CD4-positive, alpha-beta memory T cell (primary cell): ENCODE measurements at regions of chr5 and their contacts with region 1.

Region 1: GRCh38 chr5:142145106-142145900 is 36.7 kb downstream of the NDFIP1 start:
- DNase-seq: peak; percentile 54 to 66 (median 57)
- H3K4me3 ChIP-seq: no peak overlapping the region
- H3K4me3 Mint-ChIP-seq: no peak overlapping the region
- H3K27ac ChIP-seq: no peak overlapping the region
- H3K27ac Mint-ChIP-seq: no peak overlapping the region
- H3K4me1 ChIP-seq: no peaks in the 10 kb centered on the region
- H3K4me1 Mint-ChIP-seq: no peaks in the 10 kb centered on the region
- H3K27me3 ChIP-seq: no peaks in the 10 kb centered on the region
- H3K27me3 Mint-ChIP-seq: no peaks in the 10 kb centered on the region

Region 2: GRCh38 chr5:140875066-140876065 is 1269.9 kb before region 1 on chr5 and contains the start of gene PCDHA12:
- CTCF ChIA-PET with region 1: no interaction called
- POLR2A ChIA-PET with region 1: no interaction called
- intact Hi-C with region 1: no loop called
- DNase-seq: no peak
- H3K4me3 ChIP-seq: no peak within 1 kb of the TSS
- H3K4me3 Mint-ChIP-seq: peak within 1 kb of the TSS in 1 of 8 donors; percentile 17
- H3K27ac ChIP-seq: no peak within 1 kb of the TSS
- H3K27ac Mint-ChIP-seq: no peak within 1 kb of the TSS
- H3K4me1 ChIP-seq: no peaks in the 10 kb centered on the region
- H3K4me1 Mint-ChIP-seq: no peaks in the 10 kb centered on the region
- H3K27me3 ChIP-seq: no peaks in the 10 kb centered on the region
- H3K27me3 Mint-ChIP-seq: peaks cover 10 to 22% of the 10 kb centered on the region in 2 donors
- total RNA-seq, gene PCDHA12: not detected

Region 3: GRCh38 chr5:142024771-142025304 is 120.5 kb before region 1 on chr5:
- CTCF ChIA-PET with region 1: interaction called, 14 read pairs
- POLR2A ChIA-PET with region 1: interaction called, 4 read pairs
- intact Hi-C with region 1: no loop called
- DNase-seq: peak; percentile 78 to 86 (median 81)
- H3K4me3 ChIP-seq: peak overlapping the region; percentile 37 to 52
- H3K4me3 Mint-ChIP-seq: peak overlapping the region; percentile 84 to 94 (median 88)
- H3K27ac ChIP-seq: peak overlapping the region; percentile 57
- H3K27ac Mint-ChIP-seq: peak overlapping the region; percentile 93 to 99 (median 98)
- H3K4me1 ChIP-seq: peaks cover 13% of the 10 kb centered on the region
- H3K4me1 Mint-ChIP-seq: peaks cover 16 to 23% (median 19%) of the 10 kb centered on the region in 4 donors
- H3K27me3 ChIP-seq: no peaks in the 10 kb centered on the region
- H3K27me3 Mint-ChIP-seq: no peaks in the 10 kb centered on the region

Region 4: DNA sequence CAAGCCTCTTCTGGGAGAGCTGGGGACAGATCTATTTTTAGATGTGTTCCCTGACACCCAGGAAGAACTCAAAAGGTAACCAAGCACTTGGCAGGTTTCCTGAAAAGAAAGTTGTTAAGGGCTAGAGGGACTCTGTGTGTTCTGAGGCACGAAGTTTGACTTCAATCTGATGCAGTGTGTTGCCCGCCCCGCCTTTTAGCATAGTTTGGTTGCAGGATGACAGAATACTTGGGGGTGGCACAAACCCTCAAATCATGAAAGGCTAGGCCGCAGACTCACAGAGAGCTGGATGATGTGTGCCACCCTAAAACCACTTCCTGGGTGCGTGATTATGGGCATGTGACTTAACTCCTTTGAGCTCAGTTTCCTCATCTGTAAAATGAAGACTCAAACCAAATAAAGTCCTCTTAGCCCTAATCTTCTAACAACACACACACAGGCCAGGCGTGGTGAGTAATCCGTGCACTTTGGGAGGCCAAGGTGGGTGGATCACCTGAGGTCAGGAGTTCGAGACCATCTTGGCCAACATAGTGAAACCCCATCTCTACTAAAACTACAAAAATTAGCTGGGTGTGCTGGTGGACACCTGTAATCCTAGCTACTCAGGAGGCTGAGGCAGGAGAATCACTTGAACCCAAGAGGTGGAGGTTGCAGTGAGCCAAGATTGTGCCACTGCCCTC is 49.5 kb before region 1 on chr5:
- CTCF ChIA-PET with region 1: interaction called, 11 read pairs
- POLR2A ChIA-PET with region 1: interaction called, 5 read pairs
- intact Hi-C with region 1: no loop called
- DNase-seq: peak; percentile 85 to 93 (median 91)
- H3K4me3 ChIP-seq: peak overlapping the region in 1 of 2 donors; percentile 27
- H3K4me3 Mint-ChIP-seq: peak overlapping the region; percentile 37 to 73 (median 57)
- H3K27ac ChIP-seq: peak overlapping the region; percentile 84
- H3K27ac Mint-ChIP-seq: peak overlapping the region; percentile 92 to 98 (median 96)
- H3K4me1 ChIP-seq: peaks cover 48% of the 10 kb centered on the region
- H3K4me1 Mint-ChIP-seq: peaks cover 31 to 51% (median 36%) of the 10 kb centered on the region in 4 donors
- H3K27me3 ChIP-seq: no peaks in the 10 kb centered on the region
- H3K27me3 Mint-ChIP-seq: no peaks in the 10 kb centered on the region

Region 5: GRCh38 chr5:142128675-142129208 is 16.6 kb before region 1 on chr5:
- CTCF ChIA-PET with region 1: interaction called, 10 read pairs
- POLR2A ChIA-PET with region 1: no interaction called
- intact Hi-C with region 1: no loop called
- DNase-seq: no peak
- H3K4me3 ChIP-seq: no peak overlapping the region
- H3K4me3 Mint-ChIP-seq: peak overlapping the region in 4 of 8 donors; percentile 44 to 54 (median 50)
- H3K27ac ChIP-seq: no peak overlapping the region
- H3K27ac Mint-ChIP-seq: peak overlapping the region; percentile 1 to 86 (median 48)
- H3K4me1 ChIP-seq: peaks cover 75% of the 10 kb centered on the region
- H3K4me1 Mint-ChIP-seq: peaks cover 44 to 71% (median 56%) of the 10 kb centered on the region in 4 donors
- H3K27me3 ChIP-seq: no peaks in the 10 kb centered on the region
- H3K27me3 Mint-ChIP-seq: no peaks in the 10 kb centered on the region

Region 6: DNA sequence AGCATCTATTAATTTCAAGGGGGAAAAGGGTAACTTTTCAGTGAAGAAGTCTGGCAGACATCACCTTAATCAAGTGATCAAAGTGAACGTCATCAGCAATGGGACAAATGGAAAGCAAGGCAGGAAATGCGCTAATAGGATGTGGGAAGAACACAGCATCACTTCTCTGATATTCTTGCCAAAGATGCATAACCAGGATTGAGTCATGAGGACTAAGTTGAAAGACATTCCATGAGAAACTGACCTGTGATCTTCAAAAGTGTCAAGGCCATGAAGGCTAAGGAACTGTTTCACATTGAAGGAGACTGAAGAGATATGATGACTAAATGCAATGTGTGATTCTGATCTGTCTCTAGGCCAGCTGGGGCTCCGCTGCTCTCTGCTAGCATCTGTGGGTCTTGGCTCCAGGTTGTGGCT is 56.2 kb after region 1 on chr5:
- CTCF ChIA-PET with region 1: no interaction called
- POLR2A ChIA-PET with region 1: no interaction called
- intact Hi-C with region 1: no loop called
- DNase-seq: no peak
- H3K4me3 ChIP-seq: no peak overlapping the region
- H3K4me3 Mint-ChIP-seq: no peak overlapping the region
- H3K27ac ChIP-seq: no peak overlapping the region
- H3K27ac Mint-ChIP-seq: no peak overlapping the region
- H3K4me1 ChIP-seq: no peaks in the 10 kb centered on the region
- H3K4me1 Mint-ChIP-seq: no peaks in the 10 kb centered on the region
- H3K27me3 ChIP-seq: no peaks in the 10 kb centered on the region
- H3K27me3 Mint-ChIP-seq: peaks cover 0 to 1% of the 10 kb centered on the region in 2 donors